A673 (cell line): ENCODE measurements at regions of chr21 and their contacts with region 1.

Region 1: DNA sequence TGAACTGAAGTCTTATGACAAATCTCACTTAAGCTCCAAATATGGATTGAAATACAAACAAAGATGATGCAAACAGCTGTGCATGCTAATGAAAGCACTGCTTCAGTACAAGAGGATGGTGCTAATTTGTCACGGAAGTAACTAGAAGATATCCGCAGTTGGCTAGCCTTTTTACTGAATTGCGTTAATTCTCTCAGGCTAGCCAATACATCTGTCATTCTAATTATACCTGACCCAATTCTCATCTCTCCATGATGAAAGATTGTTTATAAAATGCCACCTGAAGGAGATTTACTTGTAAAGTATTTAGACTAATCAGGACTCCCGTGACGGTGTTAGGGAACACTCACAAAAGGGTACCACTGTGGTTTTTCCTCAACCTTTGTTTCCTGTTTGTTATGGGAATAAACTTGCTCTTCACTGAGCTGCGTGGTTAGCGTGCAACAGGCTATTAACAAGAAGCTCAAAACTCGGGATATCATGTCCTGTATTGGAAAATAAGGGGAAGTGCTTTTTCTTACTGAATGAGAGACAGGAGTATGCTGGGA is 162.5 kb downstream of the APP start:
- DNase-seq: peak; percentile 67
- H3K4me3 ChIP-seq: peak overlapping the region; percentile 7
- H3K27ac ChIP-seq: peak overlapping the region; percentile 76
- H3K4me1 ChIP-seq: peaks cover 39% of the 10 kb centered on the region
- H3K27me3 ChIP-seq: no peaks in the 10 kb centered on the region
- CTCF ChIP-seq: no peak

Region 2: GRCh38 chr21:25995278-25995677 is 12.7 kb before region 1 on chr21:
- CTCF ChIA-PET with region 1: no interaction called
- POLR2A ChIA-PET with region 1: no interaction called
- intact Hi-C with region 1: loop called (anchors 1 kb)
- DNase-seq: no peak
- H3K4me3 ChIP-seq: no peak overlapping the region
- H3K27ac ChIP-seq: no peak overlapping the region
- H3K4me1 ChIP-seq: peaks cover 6% of the 10 kb centered on the region
- H3K27me3 ChIP-seq: no peaks in the 10 kb centered on the region
- CTCF ChIP-seq: no peak

Region 3: GRCh38 chr21:26096494-26097371 is 88.7 kb after region 1 on chr21:
- CTCF ChIA-PET with region 1: no interaction called
- POLR2A ChIA-PET with region 1: interaction called, 11 read pairs
- intact Hi-C with region 1: no loop called
- DNase-seq: no peak
- H3K4me3 ChIP-seq: no peak overlapping the region
- H3K27ac ChIP-seq: no peak overlapping the region
- H3K4me1 ChIP-seq: peaks cover 57% of the 10 kb centered on the region
- H3K27me3 ChIP-seq: no peaks in the 10 kb centered on the region
- CTCF ChIP-seq: no peak

Region 4: DNA sequence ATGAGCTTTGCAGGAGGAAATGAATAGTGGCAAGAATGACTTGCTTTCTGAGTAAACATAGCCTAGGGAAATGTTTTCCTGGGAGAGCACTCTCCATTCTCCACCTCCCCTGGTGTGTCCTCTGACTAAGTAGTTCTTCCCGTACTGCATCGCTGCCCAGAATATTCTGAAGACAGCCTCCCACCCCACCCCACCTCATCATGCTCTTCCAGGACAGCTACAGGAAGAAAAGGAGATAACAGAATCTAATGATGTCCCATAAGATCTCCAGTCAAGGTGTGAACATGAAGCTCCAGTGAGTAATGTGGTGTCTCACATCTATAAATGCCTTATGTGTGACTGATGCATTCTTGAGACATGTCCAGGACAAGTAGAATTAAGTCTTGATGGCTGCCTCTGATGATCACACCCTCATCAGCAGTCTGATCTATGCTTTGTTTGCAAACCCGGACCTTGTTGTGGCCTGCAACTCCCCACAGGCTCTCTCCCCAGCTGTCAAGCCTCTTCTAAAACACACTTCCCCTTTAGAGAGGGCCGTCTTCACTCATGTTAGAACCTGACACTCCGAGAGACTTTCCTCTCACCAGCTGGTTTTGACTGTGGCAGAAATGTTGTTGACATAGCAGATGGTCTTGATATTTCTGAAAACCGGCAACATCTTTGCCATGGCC is 382.1 kb after region 1 on chr21:
- CTCF ChIA-PET with region 1: no interaction called
- POLR2A ChIA-PET with region 1: no interaction called
- intact Hi-C with region 1: no loop called
- DNase-seq: no peak
- H3K4me3 ChIP-seq: no peak overlapping the region
- H3K27ac ChIP-seq: no peak overlapping the region
- H3K4me1 ChIP-seq: peaks cover 10% of the 10 kb centered on the region
- H3K27me3 ChIP-seq: no peaks in the 10 kb centered on the region
- CTCF ChIP-seq: no peak